HepG2 (cell line): ENCODE measurements at regions of chr1 and their contacts with region 1.

Region 1: GRCh38 chr1:32741413-32742198 is 39.0 kb upstream of the SYNC start:
- DNase-seq: no peak
- ATAC-seq: peak; percentile 20
- H3K4me3 ChIP-seq: peak overlapping the region; percentile 80 to 92 (median 91)
- H3K27ac ChIP-seq: peak overlapping the region; percentile 87
- H3K4me1 ChIP-seq: peaks cover 62% of the 10 kb centered on the region
- H3K27me3 ChIP-seq: no peaks in the 10 kb centered on the region; a peak in 1 of 5 replicates
- CTCF ChIP-seq: peak; percentile 65
- EP300 ChIP-seq: no peak
- POLR2A ChIP-seq: no peak
- RAD21 ChIP-seq: peak; percentile 82

Region 2: GRCh38 chr1:32639489-32640075 is 102.0 kb before region 1 on chr1:
- CTCF ChIA-PET with region 1: no interaction called
- POLR2A ChIA-PET with region 1: no interaction called
- in situ Hi-C with region 1: no loop called
- intact Hi-C with region 1: no loop called
- DNase-seq: no peak
- ATAC-seq: no peak
- H3K4me3 ChIP-seq: no peak overlapping the region
- H3K27ac ChIP-seq: no peak overlapping the region
- H3K4me1 ChIP-seq: peaks cover 6% of the 10 kb centered on the region
- H3K27me3 ChIP-seq: no peaks in the 10 kb centered on the region; a peak in 1 of 5 replicates
- CTCF ChIP-seq: no peak
- EP300 ChIP-seq: no peak
- POLR2A ChIP-seq: no peak
- RAD21 ChIP-seq: no peak

Region 3: GRCh38 chr1:32761253-32761880 is 19.8 kb after region 1 on chr1:
- CTCF ChIA-PET with region 1: no interaction called
- POLR2A ChIA-PET with region 1: interaction called, 13 read pairs
- in situ Hi-C with region 1: no loop called
- intact Hi-C with region 1: no loop called
- DNase-seq: no peak
- ATAC-seq: no peak
- H3K4me3 ChIP-seq: no peak overlapping the region
- H3K27ac ChIP-seq: peak overlapping the region; percentile 92
- H3K4me1 ChIP-seq: peaks cover 62% of the 10 kb centered on the region
- H3K27me3 ChIP-seq: no peaks in the 10 kb centered on the region
- CTCF ChIP-seq: no peak
- EP300 ChIP-seq: no peak
- POLR2A ChIP-seq: no peak
- RAD21 ChIP-seq: no peak